ENCODE measurements at regions of chr2 and their contacts with region 1.

Region 1: DNA sequence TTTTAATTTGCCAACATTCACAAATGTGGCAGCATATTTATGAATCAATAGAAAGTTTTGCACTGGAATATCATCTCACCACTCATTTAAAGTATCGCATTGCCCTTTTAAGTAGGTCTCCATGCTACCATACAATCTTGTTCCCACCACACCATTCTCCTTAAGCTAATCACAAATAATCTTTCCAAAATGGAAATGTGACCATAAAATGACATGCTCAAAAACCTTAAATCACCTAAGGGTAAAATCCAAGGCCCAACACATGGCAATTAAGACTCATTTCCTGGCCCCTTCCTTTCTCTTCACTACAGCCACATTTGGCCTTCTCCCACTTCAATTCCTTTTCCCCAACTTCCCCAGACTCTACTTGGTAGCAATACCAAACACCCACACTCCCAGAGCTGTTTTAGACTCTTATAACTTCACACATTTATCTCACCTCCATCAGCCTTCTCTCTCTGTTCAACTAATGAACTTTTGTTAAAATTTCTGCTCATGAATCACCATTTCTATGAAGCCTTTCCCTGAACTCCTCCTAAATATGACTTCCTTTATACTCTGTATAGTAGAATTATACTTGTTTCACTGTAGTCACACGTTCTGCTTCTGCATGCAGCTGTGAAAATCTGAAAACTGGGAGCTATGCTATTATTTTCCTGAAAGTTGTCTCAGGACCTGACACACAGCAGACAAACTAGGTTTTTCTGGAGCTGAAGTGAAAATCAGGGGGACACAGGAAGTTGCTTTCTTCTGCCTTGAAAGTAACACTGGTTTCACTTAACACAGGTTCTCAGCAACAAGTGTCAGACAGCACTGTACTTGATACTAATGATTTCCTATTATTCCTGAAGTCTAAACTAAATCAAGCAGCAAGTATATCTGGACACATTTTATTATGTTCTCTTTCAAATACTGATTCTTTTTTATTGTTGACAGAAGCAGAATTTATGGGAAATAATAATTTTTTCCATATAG is 303.9 kb downstream of the ZEB2 start:
- DNase-seq: no peak

Region 2: DNA sequence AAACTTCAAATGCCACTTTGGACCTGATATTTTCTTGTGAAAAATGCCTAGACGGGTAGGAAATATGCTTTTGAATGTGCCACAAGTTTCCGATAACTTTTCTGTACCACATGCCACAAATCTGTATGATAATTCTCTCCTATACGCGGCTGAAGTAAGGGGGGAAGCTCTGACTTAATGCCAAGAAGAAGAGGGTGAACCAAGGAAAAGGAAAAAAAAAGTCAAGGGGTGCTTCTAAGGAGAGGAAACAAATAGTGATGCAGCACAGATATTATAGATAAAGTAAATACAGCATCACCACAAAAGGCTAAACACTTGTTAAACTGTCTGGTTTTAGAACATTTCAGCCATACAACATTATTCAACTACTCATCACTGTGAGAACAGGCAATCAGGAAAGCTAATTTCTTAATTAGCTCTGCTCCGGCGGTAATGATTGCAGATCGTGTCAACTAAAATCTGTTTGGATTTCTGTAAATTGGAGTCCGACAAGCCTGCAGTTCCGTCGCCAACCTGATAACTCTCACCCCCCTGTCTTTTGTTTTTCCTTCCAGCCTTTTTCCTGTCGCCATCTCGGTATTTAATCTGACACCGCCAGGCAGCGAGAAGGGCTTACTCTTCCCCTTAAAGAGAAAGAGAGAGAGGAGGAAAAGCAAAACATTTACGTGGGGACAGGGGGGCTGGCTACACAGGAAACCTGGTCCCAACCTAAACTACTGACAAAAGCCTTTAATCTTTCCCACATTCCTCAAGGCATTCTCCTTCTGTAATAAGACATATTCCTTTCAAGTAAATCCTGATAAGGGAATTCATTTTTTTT is 236.4 kb after region 1 on chr2:
- intact Hi-C with region 1: loop called (anchors 5 kb)
- DNase-seq: no peak

Measured in cardiac septum (tissue), 1 donor.